Esophagus squamous epithelium (tissue), 5 donors: ENCODE measurements at regions of chr4 and their contacts with region 1.

Region 1: DNA sequence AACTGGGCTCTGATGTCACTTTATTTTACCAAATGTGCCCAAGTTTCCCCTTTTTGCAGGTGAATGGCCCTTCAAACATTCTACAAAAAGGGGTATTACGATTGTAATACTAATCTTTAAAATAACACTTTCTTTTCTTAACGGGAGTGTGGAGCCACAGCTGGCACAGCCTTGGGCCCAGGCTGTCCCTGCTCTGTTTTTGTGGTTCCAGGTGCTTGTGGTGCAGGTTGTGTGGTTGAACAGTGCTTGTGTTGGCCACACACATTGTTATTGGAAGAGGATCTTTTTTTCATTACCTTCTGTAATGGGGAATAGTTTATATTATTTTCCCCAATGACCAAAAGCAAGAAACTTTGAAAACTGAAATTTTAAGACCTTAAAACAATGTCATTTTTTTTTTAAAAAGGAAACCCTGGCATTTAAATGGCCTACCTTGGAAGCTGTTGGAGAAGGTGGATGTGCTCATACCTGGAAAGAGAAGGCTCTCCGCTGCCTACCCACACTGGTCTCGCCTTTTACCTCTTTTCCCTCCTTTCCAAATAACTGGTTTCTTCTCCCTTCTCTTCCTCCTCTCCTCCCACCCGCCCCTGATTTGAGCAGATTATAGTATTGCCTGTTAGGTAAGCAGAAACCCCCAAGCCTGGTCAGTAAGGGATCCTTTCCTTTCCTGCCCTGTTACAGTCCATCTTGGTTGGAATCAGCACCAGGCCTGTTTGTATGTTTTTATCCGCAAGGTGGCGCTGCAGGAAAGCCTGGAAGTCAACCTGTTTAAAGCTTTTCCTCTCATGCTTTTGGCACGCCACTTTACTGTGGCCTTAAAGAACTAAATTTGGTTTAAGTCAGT is 28.6 kb downstream of the HADH start:
- DNase-seq: no peak
- H3K4me3 ChIP-seq: no peak overlapping the region
- H3K27ac ChIP-seq: no peak overlapping the region
- H3K4me1 ChIP-seq: no peaks in the 10 kb centered on the region
- H3K27me3 ChIP-seq: no peaks in the 10 kb centered on the region
- CTCF ChIP-seq: peak; percentile 71 to 91 (median 82)
- POLR2A ChIP-seq: no peak

Region 2: DNA sequence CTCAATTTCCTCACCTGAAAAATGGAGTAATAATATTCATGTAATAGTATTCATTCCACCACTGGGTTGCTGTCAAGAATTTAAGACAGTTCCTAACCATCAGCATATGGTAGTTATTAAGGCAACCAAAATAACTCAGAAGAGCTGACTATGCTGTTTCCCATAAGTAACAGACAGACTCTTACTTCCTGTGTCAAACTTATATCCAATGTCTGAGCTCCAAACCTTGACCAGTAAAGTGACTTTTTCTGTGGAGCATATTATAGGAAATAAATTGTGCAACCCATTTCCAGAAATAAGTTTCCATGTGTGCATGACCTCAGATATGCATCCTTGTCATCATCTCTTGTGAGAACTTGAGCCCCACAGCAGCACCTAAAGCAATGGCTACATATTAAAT is 50.2 kb after region 1 on chr4:
- intact Hi-C with region 1: no loop called
- DNase-seq: no peak
- H3K4me3 ChIP-seq: no peak overlapping the region
- H3K27ac ChIP-seq: no peak overlapping the region
- H3K4me1 ChIP-seq: peaks cover 0 to 7% (median 0%) of the 10 kb centered on the region in 3 donors
- H3K27me3 ChIP-seq: no peaks in the 10 kb centered on the region
- CTCF ChIP-seq: no peak
- POLR2A ChIP-seq: no peak

Region 3: GRCh38 chr4:108094923-108095482 is 76.7 kb after region 1 on chr4:
- intact Hi-C with region 1: no loop called
- DNase-seq: no peak
- H3K4me3 ChIP-seq: no peak overlapping the region
- H3K27ac ChIP-seq: no peak overlapping the region
- H3K4me1 ChIP-seq: no peaks in the 10 kb centered on the region
- H3K27me3 ChIP-seq: no peaks in the 10 kb centered on the region
- CTCF ChIP-seq: no peak
- POLR2A ChIP-seq: no peak

Region 4: DNA sequence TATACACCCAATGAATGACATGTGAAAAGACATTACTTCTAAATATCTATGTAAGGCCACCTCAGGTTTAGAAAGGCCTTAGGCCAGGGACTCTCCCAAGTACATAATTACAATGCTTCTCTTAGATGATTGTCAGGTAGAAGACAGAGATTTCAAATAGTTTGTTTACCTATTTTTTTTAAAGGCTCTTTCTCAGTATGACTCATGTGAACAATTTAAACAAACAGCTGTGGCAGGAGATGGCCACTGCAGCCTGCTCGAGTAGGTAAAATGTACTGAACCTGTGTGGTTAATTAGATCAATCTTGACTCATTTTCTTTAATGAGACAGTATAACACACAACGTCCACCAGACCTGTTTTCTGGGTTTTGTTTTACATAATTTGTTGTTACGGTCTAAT is 100.2 kb after region 1 on chr4:
- intact Hi-C with region 1: no loop called
- DNase-seq: no peak
- H3K4me3 ChIP-seq: no peak overlapping the region
- H3K27ac ChIP-seq: no peak overlapping the region
- H3K4me1 ChIP-seq: peaks cover 0 to 33% (median 0%) of the 10 kb centered on the region in 3 donors
- H3K27me3 ChIP-seq: no peaks in the 10 kb centered on the region
- CTCF ChIP-seq: peak in 2 of 6 experiments; percentile 4 to 32
- POLR2A ChIP-seq: no peak

Region 5: GRCh38 chr4:108570993-108571569 is 552.8 kb after region 1 on chr4:
- intact Hi-C with region 1: loop called (anchors 5 kb)
- DNase-seq: no peak
- H3K4me3 ChIP-seq: no peak overlapping the region
- H3K27ac ChIP-seq: no peak overlapping the region
- H3K4me1 ChIP-seq: peaks cover 0 to 4% (median 0%) of the 10 kb centered on the region in 3 donors
- H3K27me3 ChIP-seq: peaks cover 0 to 5% (median 0%) of the 10 kb centered on the region in 4 donors
- CTCF ChIP-seq: no peak
- POLR2A ChIP-seq: no peak